Testis (tissue), 5 donors: ENCODE measurements at regions of chr7 and their contacts with region 1.

Region 1: GRCh38 chr7:25894902-25895791 is 256.9 kb upstream of the NFE2L3 start:
- DNase-seq: peak; percentile 82
- H3K4me3 ChIP-seq: peak overlapping the region; percentile 5 to 26
- H3K27ac ChIP-seq: no peak overlapping the region
- H3K4me1 ChIP-seq: peaks cover 11% of the 10 kb centered on the region
- H3K27me3 ChIP-seq: no peaks in the 10 kb centered on the region
- CTCF ChIP-seq: peak; percentile 41 to 63 (median 55)
- POLR2A ChIP-seq: no peak

Region 2: GRCh38 chr7:25770670-25771069 is 124.5 kb before region 1 on chr7:
- intact Hi-C with region 1: no loop called
- DNase-seq: no peak
- H3K4me3 ChIP-seq: no peak overlapping the region
- H3K27ac ChIP-seq: peak overlapping the region in 1 of 2 donors; percentile 76
- H3K4me1 ChIP-seq: peaks cover 18% of the 10 kb centered on the region
- H3K27me3 ChIP-seq: no peaks in the 10 kb centered on the region
- CTCF ChIP-seq: no peak
- POLR2A ChIP-seq: no peak

Region 3: GRCh38 chr7:26061688-26062150 is 166.6 kb after region 1 on chr7:
- intact Hi-C with region 1: loop called (anchors 5 kb)
- DNase-seq: peak; percentile 83
- H3K4me3 ChIP-seq: no peak overlapping the region
- H3K27ac ChIP-seq: no peak overlapping the region
- H3K4me1 ChIP-seq: peaks cover 4% of the 10 kb centered on the region
- H3K27me3 ChIP-seq: no peaks in the 10 kb centered on the region
- CTCF ChIP-seq: peak; percentile 49 to 79 (median 62)
- POLR2A ChIP-seq: no peak